ENCODE measurements at regions of chr5 and their contacts with region 1.

Region 1: GRCh38 chr5:66306105-66306843 is 162.2 kb downstream of the SREK1 start:
- DNase-seq: no peak
- ATAC-seq: peak; percentile 92 to 95
- H3K4me3 ChIP-seq: no peak overlapping the region
- H3K27ac ChIP-seq: no peak overlapping the region
- H3K4me1 ChIP-seq: peaks cover 6% of the 10 kb centered on the region
- H3K27me3 ChIP-seq: no peaks in the 10 kb centered on the region
- CTCF ChIP-seq: peak; percentile 81

Region 2: DNA sequence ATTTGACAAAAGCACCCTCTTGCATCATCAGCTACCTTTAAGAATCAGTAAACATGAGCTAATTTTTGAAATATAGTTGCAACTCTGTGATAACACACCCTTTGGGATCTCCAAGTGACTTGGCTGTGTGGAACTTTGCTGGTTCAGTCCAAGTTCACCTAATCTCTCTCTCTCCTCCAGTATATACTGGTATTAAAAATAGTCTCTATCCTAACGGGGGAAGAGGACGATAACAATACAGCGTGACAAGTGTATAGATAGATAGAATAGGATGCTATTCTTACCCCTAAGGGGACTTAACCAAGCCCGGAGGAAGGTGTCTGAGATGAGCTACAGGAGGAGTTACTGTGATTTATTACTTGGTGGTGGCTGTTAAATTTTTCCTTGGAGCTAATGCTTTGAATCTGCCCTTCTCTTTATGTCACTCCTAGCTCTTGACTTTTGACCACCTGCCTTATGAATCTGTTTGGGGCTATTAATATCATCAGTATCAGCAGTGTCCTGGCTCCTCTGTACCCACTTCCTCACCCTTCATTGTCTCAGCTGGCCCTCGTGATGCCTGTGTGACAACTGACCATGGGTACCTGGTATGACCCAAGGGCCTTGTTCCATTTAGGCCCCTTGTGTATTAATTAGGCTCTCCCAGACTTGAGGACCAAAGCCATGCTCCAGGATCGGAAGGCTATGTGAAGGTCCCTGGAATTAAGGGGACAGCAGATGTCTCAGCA is 61.7 kb after region 1 on chr5:
- intact Hi-C with region 1: no loop called
- DNase-seq: no peak
- ATAC-seq: no peak
- H3K4me3 ChIP-seq: no peak overlapping the region
- H3K27ac ChIP-seq: no peak overlapping the region
- H3K4me1 ChIP-seq: no peaks in the 10 kb centered on the region
- H3K27me3 ChIP-seq: no peaks in the 10 kb centered on the region
- CTCF ChIP-seq: no peak

Region 3: GRCh38 chr5:66440202-66440680 is 134.0 kb after region 1 on chr5:
- intact Hi-C with region 1: no loop called
- DNase-seq: no peak
- ATAC-seq: peak; percentile 23 to 71
- H3K4me3 ChIP-seq: no peak overlapping the region
- H3K27ac ChIP-seq: no peak overlapping the region
- H3K4me1 ChIP-seq: no peaks in the 10 kb centered on the region
- H3K27me3 ChIP-seq: no peaks in the 10 kb centered on the region
- CTCF ChIP-seq: no peak

Region 4: GRCh38 chr5:66757188-66757833 is 451.0 kb after region 1 on chr5:
- intact Hi-C with region 1: loop called (anchors 5 kb)
- DNase-seq: no peak
- ATAC-seq: peak; percentile 75 to 92
- H3K4me3 ChIP-seq: no peak overlapping the region
- H3K27ac ChIP-seq: no peak overlapping the region
- H3K4me1 ChIP-seq: no peaks in the 10 kb centered on the region
- H3K27me3 ChIP-seq: no peaks in the 10 kb centered on the region
- CTCF ChIP-seq: peak; percentile 50

Region 5: GRCh38 chr5:67315082-67315989 is 1009.1 kb after region 1 on chr5:
- intact Hi-C with region 1: no loop called
- DNase-seq: no peak
- ATAC-seq: peak; percentile 62 to 69
- H3K4me3 ChIP-seq: no peak overlapping the region
- H3K27ac ChIP-seq: peak overlapping the region; percentile 58
- H3K4me1 ChIP-seq: peaks cover 12% of the 10 kb centered on the region
- H3K27me3 ChIP-seq: no peaks in the 10 kb centered on the region
- CTCF ChIP-seq: no peak

Measured in lower lobe of right lung (tissue), 2 donors.